ENCODE measurements at regions of chr9 and their contacts with region 1.

Region 1: DNA sequence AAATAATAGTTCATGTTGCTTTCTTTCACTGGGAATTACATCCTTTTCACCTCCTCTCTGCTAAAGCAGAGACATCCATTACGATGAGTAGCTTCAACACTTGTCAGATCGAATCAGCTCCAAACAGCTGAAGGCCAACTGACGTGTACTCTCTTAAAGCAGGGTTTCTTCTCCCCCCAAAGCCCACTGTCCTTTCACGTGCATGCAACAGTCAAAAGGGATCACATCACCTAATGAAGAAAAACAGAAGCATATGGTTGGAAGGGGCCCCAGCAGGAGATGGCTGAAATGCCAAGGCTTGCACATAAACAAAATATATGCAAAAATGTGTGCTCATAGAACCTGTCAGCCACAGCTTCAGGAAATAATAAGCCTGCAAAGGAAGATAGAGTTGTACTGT is 421.6 kb downstream of the ANXA1 start:
- DNase-seq: no peak
- ATAC-seq: no peak
- H3K4me3 ChIP-seq: no peak overlapping the region
- H3K27ac ChIP-seq: no peak overlapping the region
- H3K4me1 ChIP-seq: no peaks in the 10 kb centered on the region
- H3K27me3 ChIP-seq: no peaks in the 10 kb centered on the region
- CTCF ChIP-seq: no peak
- EP300 ChIP-seq: no peak
- POLR2A ChIP-seq: no peak
- RAD21 ChIP-seq: no peak

Region 2: DNA sequence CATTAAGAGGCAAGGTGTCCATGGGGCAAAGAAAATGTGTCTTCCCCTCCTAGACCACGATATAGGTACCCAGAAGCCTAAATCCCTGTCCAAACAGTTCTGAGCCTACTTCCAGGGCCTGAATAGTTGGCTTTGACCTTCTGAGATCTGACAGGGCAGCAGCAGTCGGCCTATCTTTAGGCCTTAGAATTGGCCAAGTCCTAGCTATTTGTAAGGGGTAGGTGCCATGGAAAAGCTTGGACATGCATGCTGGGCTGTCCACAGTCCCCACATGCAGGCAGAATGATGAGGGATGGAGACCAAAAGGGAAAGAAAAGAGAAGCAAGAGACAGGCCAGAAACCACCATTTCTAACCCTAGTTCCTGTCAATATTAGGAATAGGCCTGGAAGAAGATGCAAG is 75.4 kb before region 1 on chr9:
- CTCF ChIA-PET with region 1: no interaction called
- POLR2A ChIA-PET with region 1: no interaction called
- in situ Hi-C with region 1: no loop called
- intact Hi-C with region 1: loop called (anchors 5 kb)
- DNase-seq: no peak
- ATAC-seq: no peak
- H3K4me3 ChIP-seq: no peak overlapping the region
- H3K27ac ChIP-seq: no peak overlapping the region
- H3K4me1 ChIP-seq: no peaks in the 10 kb centered on the region
- H3K27me3 ChIP-seq: no peaks in the 10 kb centered on the region
- CTCF ChIP-seq: no peak
- EP300 ChIP-seq: no peak
- POLR2A ChIP-seq: no peak
- RAD21 ChIP-seq: no peak

Measured in HepG2 (cell line).